Activated B cell treated with CpG ODN at 0.5 μM for 24 hours (primary cell): ENCODE measurements at regions of chr2 and their contacts with region 1.

Region 1: GRCh38 chr2:205680067-205680466 is 2.2 kb upstream of the NRP2 start:
- DNase-seq: no peak
- ATAC-seq: peak; percentile 32
- H3K4me3 Mint-ChIP-seq: peak overlapping the region; percentile 44
- H3K27ac Mint-ChIP-seq: peak overlapping the region; percentile 37
- H3K4me1 Mint-ChIP-seq: peaks cover 40% of the 10 kb centered on the region
- H3K27me3 Mint-ChIP-seq: peaks cover 35% of the 10 kb centered on the region
- CTCF ChIP-seq: no peak

Region 2: DNA sequence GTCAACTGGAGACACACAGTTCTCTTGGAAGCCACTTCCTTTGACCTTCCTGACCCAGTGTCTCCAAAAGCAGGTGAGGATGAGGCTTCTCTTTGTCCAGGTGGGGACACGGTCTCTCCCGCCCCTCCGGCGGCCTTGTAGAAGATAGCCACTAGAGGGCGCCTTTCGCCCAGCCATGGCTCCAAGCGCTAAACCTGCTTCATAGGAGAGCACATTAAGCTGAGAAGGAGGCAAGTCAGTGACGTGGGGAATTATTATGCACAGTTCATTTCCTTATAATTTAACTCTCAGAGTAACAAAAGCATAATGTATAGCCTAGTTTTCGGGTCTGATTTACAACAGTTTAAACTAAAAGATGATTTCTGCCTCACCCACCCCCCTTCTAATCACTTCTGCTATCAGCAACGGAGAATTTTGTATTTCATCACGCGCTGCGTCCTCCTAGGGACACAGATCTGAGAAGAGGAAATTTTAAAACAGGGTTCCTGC is 1534.8 kb before region 1 on chr2:
- CTCF ChIA-PET with region 1: interaction called, 6 read pairs
- POLR2A ChIA-PET with region 1: no interaction called
- intact Hi-C with region 1: loop called (anchors 2 kb)
- DNase-seq: peak; percentile 42
- ATAC-seq: peak; percentile 71
- H3K4me3 Mint-ChIP-seq: peak overlapping the region; percentile 66
- H3K27ac Mint-ChIP-seq: no peak overlapping the region
- H3K4me1 Mint-ChIP-seq: peaks cover 9% of the 10 kb centered on the region
- H3K27me3 Mint-ChIP-seq: peaks cover 14% of the 10 kb centered on the region
- CTCF ChIP-seq: peak; percentile 90

Region 3: DNA sequence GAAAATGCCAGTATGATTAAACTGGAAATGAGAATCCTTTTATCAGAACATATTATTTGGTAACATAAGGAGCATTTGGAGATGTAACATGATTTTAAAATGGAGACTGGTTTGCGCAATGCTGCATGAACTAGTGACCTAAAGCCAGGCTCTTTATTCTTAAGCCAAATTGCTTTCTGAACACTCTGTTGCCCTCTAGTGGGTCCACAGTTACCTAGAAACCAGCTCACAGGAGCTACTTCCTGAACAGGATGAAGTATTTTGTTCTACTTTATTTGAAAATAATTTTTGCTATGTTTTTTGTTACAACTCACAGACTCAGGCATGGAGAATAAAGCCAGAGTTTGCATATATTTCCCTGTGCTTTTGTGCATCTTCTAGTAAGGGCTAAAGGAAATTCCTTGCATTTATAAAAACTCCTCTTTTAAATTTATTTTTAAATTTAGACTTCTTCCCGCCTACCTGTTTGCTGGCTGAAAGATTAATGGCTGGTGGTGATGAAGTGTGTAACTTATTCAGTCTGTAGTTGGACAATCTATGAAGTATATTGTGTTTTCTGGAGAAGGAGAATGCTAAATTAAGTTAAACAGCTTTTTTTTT is 988.1 kb before region 1 on chr2:
- CTCF ChIA-PET with region 1: interaction called, 3 read pairs
- POLR2A ChIA-PET with region 1: no interaction called
- intact Hi-C with region 1: loop called (anchors 10 kb)
- DNase-seq: no peak
- ATAC-seq: no peak
- H3K4me3 Mint-ChIP-seq: no peak overlapping the region
- H3K27ac Mint-ChIP-seq: no peak overlapping the region
- H3K4me1 Mint-ChIP-seq: no peaks in the 10 kb centered on the region
- H3K27me3 Mint-ChIP-seq: no peaks in the 10 kb centered on the region
- CTCF ChIP-seq: no peak

Region 4: GRCh38 chr2:205706769-205707381 is 26.8 kb after region 1 on chr2:
- CTCF ChIA-PET with region 1: interaction called, 16 read pairs
- POLR2A ChIA-PET with region 1: interaction called, 72 read pairs
- intact Hi-C with region 1: loop called (anchors 1 kb)
- DNase-seq: peak; percentile 60
- ATAC-seq: peak; percentile 95
- H3K4me3 Mint-ChIP-seq: peak overlapping the region; percentile 65
- H3K27ac Mint-ChIP-seq: peak overlapping the region; percentile 99
- H3K4me1 Mint-ChIP-seq: peaks cover 63% of the 10 kb centered on the region
- H3K27me3 Mint-ChIP-seq: no peaks in the 10 kb centered on the region
- CTCF ChIP-seq: no peak

Region 5: DNA sequence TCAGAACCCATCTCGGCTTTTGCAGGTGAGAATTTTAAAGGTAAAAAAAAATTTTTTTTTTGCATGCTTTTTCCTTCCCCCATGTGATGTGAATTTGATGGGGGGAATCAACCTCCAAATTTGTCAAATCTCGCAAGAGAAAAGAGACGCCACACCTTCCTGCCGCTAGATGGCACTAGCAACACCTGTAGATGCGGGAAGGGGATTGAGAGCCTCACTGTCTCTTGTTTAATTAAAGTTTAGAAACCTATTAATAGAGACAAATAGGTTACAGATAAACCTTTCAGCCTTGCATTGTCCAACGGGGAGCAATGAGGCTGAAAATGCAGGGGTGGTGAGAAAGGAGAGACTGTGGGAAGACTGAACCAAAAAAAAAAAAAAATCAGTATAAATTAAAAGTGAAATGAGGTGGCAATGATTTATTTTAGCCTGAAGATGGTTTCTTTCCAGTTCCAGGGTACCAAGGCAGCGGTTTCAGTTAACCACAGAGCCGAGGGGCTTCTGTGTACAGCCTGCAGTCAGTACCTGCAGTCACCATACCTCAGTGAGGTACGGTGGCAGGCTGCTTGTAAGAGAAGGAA is 86.8 kb after region 1 on chr2:
- CTCF ChIA-PET with region 1: interaction called, 7 read pairs
- POLR2A ChIA-PET with region 1: no interaction called
- intact Hi-C with region 1: loop called (anchors 2 kb)
- DNase-seq: no peak
- ATAC-seq: no peak
- H3K4me3 Mint-ChIP-seq: no peak overlapping the region
- H3K27ac Mint-ChIP-seq: no peak overlapping the region
- H3K4me1 Mint-ChIP-seq: peaks cover 4% of the 10 kb centered on the region
- H3K27me3 Mint-ChIP-seq: peaks cover 20% of the 10 kb centered on the region
- CTCF ChIP-seq: peak; percentile 62